ENCODE measurements at regions of chr11 and their contacts with region 1.

Region 1: DNA sequence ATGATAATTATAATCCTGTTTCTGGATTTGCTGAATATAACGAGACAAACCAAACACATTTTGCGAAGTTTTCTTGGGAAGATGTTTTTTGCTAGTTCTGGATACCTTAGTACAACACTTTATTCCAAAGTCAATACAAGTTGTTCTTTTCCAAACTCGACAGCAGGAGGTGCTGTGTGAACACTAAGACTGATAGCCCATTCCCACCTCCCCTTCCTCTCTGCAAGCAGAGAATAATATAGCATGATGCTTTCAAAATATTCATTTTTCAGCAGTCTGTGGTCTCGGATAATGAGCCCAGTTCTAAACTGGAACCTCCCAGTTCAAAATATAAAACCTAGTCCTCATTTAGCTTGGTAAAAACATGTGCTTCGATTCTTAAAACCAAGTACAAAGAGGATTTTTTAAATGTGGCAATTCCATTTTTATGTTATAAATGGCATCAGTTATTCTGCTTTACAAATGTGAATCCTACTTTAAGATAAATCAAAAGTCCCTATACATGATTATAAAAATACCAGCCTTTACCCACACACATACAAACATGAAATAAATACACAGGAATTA is 129.1 kb downstream of the DCDC1 start:
- DNase-seq: peak; percentile 59 to 76 (median 69)
- H3K4me3 ChIP-seq: no peak overlapping the region
- H3K27ac ChIP-seq: no peak overlapping the region
- H3K4me1 ChIP-seq: no peaks in the 10 kb centered on the region
- H3K27me3 ChIP-seq: no peaks in the 10 kb centered on the region

Region 2: GRCh38 chr11:31262761-31263160 is 22.3 kb after region 1 on chr11:
- CTCF ChIA-PET with region 1: no interaction called
- POLR2A ChIA-PET with region 1: no interaction called
- DNase-seq: no peak
- H3K4me3 ChIP-seq: no peak overlapping the region
- H3K27ac ChIP-seq: no peak overlapping the region
- H3K4me1 ChIP-seq: no peaks in the 10 kb centered on the region
- H3K27me3 ChIP-seq: no peaks in the 10 kb centered on the region

Region 3: DNA sequence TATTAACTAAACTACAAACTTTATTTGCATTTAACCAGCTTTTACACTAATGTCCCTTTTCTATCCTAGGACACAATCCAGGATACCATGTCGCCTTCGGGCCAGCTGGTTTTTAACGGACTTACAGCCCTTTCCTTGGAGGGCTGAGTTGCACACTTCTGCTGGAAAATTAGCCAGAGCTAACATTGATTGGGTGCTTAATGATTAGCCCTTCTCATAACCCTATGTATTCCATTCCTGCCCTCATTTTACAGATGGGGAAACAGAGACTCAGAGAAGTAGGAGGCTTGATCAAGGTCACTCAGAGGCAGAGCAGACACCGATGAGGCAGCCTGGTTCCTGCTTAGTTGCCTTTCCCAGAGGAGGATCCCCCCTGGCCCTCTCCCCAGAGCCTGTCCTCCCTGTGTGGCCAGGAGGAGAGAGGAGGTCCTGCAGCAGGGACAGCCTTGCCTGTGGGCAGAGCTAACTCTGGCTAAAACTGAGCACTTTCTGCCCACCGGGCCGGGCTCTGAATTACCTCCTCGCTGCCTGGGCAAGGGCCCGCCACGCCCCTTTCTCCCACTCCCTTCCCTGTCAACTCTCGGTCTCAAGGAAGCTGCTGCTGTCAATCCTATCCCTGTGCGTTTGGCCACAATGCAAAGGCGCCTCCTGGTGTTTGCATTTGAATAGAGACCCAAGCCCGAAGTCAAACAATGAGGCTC is 630.3 kb after region 1 on chr11:
- CTCF ChIA-PET with region 1: interaction called, 43 read pairs
- POLR2A ChIA-PET with region 1: no interaction called
- DNase-seq: peak; percentile 39 to 59 (median 43)
- H3K4me3 ChIP-seq: no peak overlapping the region
- H3K27ac ChIP-seq: no peak overlapping the region
- H3K4me1 ChIP-seq: peaks cover 0 to 3% (median 0%) of the 10 kb centered on the region in 4 experiments
- H3K27me3 ChIP-seq: peaks cover 3 to 24% (median 14%) of the 10 kb centered on the region in 5 experiments